ENCODE measurements at regions of chr2 and their contacts with region 1.

Region 1: DNA sequence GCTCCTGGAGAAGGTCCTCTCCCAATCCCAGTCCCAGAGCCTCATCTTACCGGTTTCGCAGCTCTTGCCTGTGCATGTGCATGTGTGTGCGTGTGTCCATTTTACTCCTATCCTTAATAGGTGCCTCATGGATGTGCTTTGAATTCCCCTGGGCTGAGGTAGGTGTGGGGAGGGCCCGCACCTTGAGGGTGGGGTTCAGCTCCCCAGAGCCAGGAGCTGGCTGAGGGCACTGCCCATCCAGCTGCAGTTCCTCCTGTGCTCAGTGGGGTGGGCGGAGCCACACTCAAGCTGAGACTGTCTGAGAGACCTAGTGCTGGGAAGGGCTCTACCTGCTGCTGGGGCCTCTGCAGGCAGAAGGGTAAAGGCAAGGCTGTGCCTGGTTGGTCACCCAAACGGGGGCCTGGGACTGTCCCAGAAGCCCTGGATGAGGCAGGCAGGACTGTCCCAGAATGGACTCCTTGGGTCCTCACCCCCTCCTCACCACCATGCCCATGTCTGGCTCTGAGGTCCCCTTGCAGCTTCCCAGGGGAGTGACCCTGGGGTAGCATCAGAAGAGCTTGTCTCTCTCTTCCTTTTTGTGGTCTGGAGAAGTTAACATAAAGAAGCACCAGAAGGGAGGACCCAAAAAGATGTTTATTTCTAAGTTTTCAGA is 8.9 kb downstream of the GDF7 start:
- DNase-seq: peak; percentile 60
- ATAC-seq: peak; percentile 69
- H3K4me3 Mint-ChIP-seq: no peak overlapping the region
- H3K27ac Mint-ChIP-seq: no peak overlapping the region
- H3K4me1 Mint-ChIP-seq: peaks cover 52% of the 10 kb centered on the region
- H3K27me3 Mint-ChIP-seq: peaks cover 50% of the 10 kb centered on the region
- CTCF ChIP-seq: no peak

Region 2: GRCh38 chr2:20691076-20691734 is 15.4 kb after region 1 on chr2:
- CTCF ChIA-PET with region 1: interaction called, 17 read pairs
- POLR2A ChIA-PET with region 1: no interaction called
- DNase-seq: no peak
- ATAC-seq: no peak
- H3K4me3 Mint-ChIP-seq: no peak overlapping the region
- H3K27ac Mint-ChIP-seq: 0 out of 2 replicates have a peak overlapping the region, but pooled peaks have one; percentile 36
- H3K4me1 Mint-ChIP-seq: no peaks in the 10 kb centered on the region
- H3K27me3 Mint-ChIP-seq: no peaks in the 10 kb centered on the region
- CTCF ChIP-seq: no peak

Region 3: GRCh38 chr2:20962939-20963557 is 287.2 kb after region 1 on chr2:
- CTCF ChIA-PET with region 1: interaction called, 22 read pairs
- POLR2A ChIA-PET with region 1: no interaction called
- DNase-seq: peak; percentile 87
- ATAC-seq: peak; percentile 87
- H3K4me3 Mint-ChIP-seq: no peak overlapping the region
- H3K27ac Mint-ChIP-seq: no peak overlapping the region
- H3K4me1 Mint-ChIP-seq: no peaks in the 10 kb centered on the region
- H3K27me3 Mint-ChIP-seq: no peaks in the 10 kb centered on the region; the same call in 1 of the 2 replicates
- CTCF ChIP-seq: peak; percentile 82

Region 4: GRCh38 chr2:21025690-21026478 is 350.1 kb after region 1 on chr2:
- CTCF ChIA-PET with region 1: interaction called, 16 read pairs
- POLR2A ChIA-PET with region 1: no interaction called
- DNase-seq: no peak
- ATAC-seq: no peak
- H3K4me3 Mint-ChIP-seq: no peak overlapping the region
- H3K27ac Mint-ChIP-seq: 0 out of 2 replicates have a peak overlapping the region, but pooled peaks have one; percentile 21
- H3K4me1 Mint-ChIP-seq: no peaks in the 10 kb centered on the region
- H3K27me3 Mint-ChIP-seq: no peaks in the 10 kb centered on the region
- CTCF ChIP-seq: no peak